Activated CD4-positive, alpha-beta T cell treated with anti-CD3 and anti-CD28 coated beads, Interleukin-2, amount 10 ng/mL, durations not matched to agents 24 days and 14 days (primary cell): ENCODE measurements at regions of chr7 and their contacts with region 1.

Region 1: GRCh38 chr7:131040467-131040932 is 287.2 kb upstream of the MKLN1 start:
- DNase-seq: peak; percentile 87
- H3K4me3 Mint-ChIP-seq: peak overlapping the region; percentile 38
- H3K27ac Mint-ChIP-seq: peak overlapping the region; percentile 11
- H3K4me1 Mint-ChIP-seq: peaks cover 25% of the 10 kb centered on the region
- H3K27me3 Mint-ChIP-seq: no peaks in the 10 kb centered on the region

Region 2: GRCh38 chr7:130982160-130982638 is 58.3 kb before region 1 on chr7:
- intact Hi-C with region 1: loop called (anchors 1 kb)
- DNase-seq: peak; percentile 78
- H3K4me3 Mint-ChIP-seq: no peak overlapping the region
- H3K27ac Mint-ChIP-seq: no peak overlapping the region
- H3K4me1 Mint-ChIP-seq: peaks cover 34% of the 10 kb centered on the region
- H3K27me3 Mint-ChIP-seq: no peaks in the 10 kb centered on the region